Ascending aorta (tissue), 2 donors: ENCODE measurements at regions of chr16 and their contacts with region 1.

Region 1: GRCh38 chr16:3264137-3265036 is 8.0 kb upstream of the MEFV start:
- DNase-seq: peak; percentile 90 to 98
- H3K4me3 ChIP-seq: peak overlapping the region; percentile 56 to 66
- H3K27ac ChIP-seq: peak overlapping the region; percentile 89 to 94
- H3K4me1 ChIP-seq: peaks cover 0 to 10% of the 10 kb centered on the region in 2 donors
- H3K27me3 ChIP-seq: no peaks in the 10 kb centered on the region
- CTCF ChIP-seq: peak in 1 of 3 experiments; percentile 33

Region 2: GRCh38 chr16:3106205-3106928 is 158.0 kb before region 1 on chr16:
- intact Hi-C with region 1: no loop called
- DNase-seq: peak; percentile 63 to 96
- H3K4me3 ChIP-seq: peak overlapping the region; percentile 58 to 73
- H3K27ac ChIP-seq: peak overlapping the region; percentile 46 to 48
- H3K4me1 ChIP-seq: peaks cover 4 to 5% of the 10 kb centered on the region in 2 donors
- H3K27me3 ChIP-seq: no peaks in the 10 kb centered on the region
- CTCF ChIP-seq: no peak

Region 3: DNA sequence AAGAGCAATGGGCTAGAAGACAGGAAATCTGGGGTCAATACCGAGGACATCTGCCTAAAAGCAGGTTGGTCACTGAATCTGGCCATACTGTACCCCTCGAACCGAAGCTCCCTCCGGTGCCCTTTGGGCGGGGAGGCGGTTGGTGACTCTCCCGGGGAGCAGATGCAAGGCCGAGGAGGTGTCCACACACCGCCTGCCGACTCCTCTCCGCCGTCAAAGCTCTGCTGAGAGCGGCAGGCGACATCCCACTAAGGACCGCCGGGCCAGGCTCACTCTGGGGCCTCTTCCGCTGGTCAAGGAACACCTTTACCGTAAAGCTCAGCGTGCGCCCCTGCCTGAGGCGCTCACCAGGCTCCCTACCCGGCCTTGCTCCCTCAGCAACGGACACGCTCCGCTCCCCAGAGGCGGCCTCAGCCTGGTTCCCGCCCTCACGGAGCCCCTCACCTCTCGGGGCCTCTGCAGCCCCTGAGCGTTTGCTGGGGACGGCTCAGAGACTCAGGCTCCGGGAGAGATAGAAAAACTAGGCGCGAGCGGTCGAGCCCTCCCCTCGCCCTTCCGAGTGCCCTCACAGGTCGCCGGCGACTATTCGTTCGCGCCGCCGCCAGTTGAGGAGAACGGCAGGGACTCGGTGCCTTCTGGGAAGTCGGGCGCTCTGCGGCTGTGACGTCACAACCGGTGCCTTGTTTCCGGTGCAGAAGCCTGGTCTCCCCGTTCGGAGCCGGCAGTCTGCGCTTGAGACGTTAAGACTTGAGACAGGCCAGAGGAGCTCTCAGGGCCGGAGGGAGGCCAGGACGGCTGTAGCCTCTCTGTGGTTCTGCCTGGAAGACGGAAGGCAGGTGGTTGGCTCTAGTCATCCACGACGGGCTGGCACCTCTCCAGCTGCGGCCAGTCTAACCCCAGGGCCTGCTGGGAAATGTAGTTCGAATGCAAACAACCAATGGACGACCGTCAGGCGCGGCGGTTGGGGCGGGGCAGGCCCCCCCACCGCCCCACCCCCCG is 29.5 kb before region 1 on chr16 and contains the start of gene ZNF200:
- intact Hi-C with region 1: loop called (anchors 1 kb)
- DNase-seq: peak; percentile 79 to 97
- H3K4me3 ChIP-seq: peak within 1 kb of the TSS; percentile 84 to 97
- H3K27ac ChIP-seq: peak within 1 kb of the TSS; percentile 94 to 97
- H3K4me1 ChIP-seq: peaks cover 0 to 8% of the 10 kb centered on the region in 2 donors
- H3K27me3 ChIP-seq: no peaks in the 10 kb centered on the region
- CTCF ChIP-seq: no peak
- total RNA-seq, gene ZNF200: 14.6 TPM

Region 4: DNA sequence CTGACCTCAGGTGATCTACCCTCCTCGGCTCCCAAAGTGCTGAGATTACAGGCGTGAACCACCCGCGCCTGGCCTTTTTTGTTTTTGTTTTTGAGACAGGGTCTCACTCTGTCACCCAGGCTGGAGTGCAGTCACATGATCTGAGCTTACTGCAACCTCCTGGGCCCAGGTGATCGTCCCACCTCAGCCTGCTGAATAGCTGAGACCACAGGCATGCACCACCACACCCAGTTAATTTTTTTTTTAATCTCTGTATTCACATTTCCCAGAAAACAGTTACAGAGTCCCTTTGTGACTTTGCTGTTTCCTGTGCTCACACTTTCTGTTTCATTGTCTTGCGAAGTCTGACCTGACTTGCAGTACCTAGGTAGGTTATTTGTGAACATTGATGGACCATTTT is 239.1 kb after region 1 on chr16:
- intact Hi-C with region 1: loop called (anchors 5 kb)
- DNase-seq: no peak
- H3K4me3 ChIP-seq: no peak overlapping the region
- H3K27ac ChIP-seq: no peak overlapping the region
- H3K4me1 ChIP-seq: peaks cover 4% of the 10 kb centered on the region in 2 donors
- H3K27me3 ChIP-seq: no peaks in the 10 kb centered on the region
- CTCF ChIP-seq: no peak